Heart left ventricle (tissue), 16 donors: ENCODE measurements at regions of chr6 and their contacts with region 1.

Region 1: GRCh38 chr6:137933696-137934095 is 66.6 kb downstream of the TNFAIP3 start:
- DNase-seq: peak in 4 of 5 donors; percentile 13 to 48 (median 30)
- ATAC-seq: peak; percentile 47 to 91 (median 87)
- H3K4me3 ChIP-seq: no peak overlapping the region
- H3K27ac ChIP-seq: no peak overlapping the region
- H3K4me1 ChIP-seq: peaks cover 0 to 9% (median 0%) of the 10 kb centered on the region in 12 donors
- H3K27me3 ChIP-seq: no peaks in the 10 kb centered on the region
- CTCF ChIP-seq: no peak
- POLR2A ChIP-seq: no peak

Region 2: DNA sequence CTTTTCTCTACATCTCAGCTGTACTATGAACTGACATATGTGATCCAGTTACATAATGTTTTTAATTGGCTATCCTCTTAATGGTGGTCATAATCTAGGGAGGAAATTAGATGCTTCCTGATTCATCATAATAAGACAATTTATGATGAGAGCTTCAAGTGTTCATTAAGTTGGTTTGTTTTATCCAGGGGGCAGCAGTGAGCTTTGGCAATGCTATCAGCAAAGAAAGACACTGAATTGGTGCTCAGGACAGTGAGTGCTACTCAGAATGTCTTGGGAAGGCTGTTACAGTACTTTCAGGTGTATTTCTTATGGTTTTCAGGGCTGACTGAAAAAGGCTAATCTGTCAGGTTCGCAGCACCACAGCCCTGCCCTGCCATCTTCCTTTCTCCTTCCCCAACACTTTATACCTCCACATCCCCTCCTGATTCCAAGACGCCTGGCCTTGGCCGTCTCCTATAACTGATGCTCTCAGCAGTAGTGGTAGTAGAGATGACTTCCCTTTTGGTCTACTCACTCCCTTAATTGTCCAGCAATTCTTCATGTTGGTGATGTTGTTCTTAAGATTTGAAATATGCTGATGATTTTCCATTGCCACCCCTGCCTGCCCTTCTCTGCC is 133.6 kb before region 1 on chr6:
- intact Hi-C with region 1: loop called in 1 of 10 experiments (anchors 10 kb)
- DNase-seq: peak in 3 of 5 donors; percentile 29 to 48 (median 48)
- ATAC-seq: peak in 3 of 4 donors; percentile 42 to 54 (median 46)
- H3K4me3 ChIP-seq: no peak overlapping the region
- H3K27ac ChIP-seq: no peak overlapping the region
- H3K4me1 ChIP-seq: peaks cover 0 to 24% (median under 1%) of the 10 kb centered on the region in 12 donors
- H3K27me3 ChIP-seq: no peaks in the 10 kb centered on the region
- CTCF ChIP-seq: peak; percentile 19 to 66 (median 54)
- POLR2A ChIP-seq: no peak

Region 3: GRCh38 chr6:137873273-137873762 is 60.4 kb before region 1 on chr6:
- intact Hi-C with region 1: loop called in 2 of 10 experiments (anchors 2 to 10 kb)
- DNase-seq: peak in 4 of 5 donors; percentile 49 to 80 (median 66)
- ATAC-seq: peak; percentile 88 to 96 (median 92)
- H3K4me3 ChIP-seq: peak overlapping the region in 9 of 12 donors; percentile 2 to 98 (median 16)
- H3K27ac ChIP-seq: peak overlapping the region in 8 of 12 donors; percentile 3 to 82 (median 46)
- H3K4me1 ChIP-seq: peaks cover 0 to 86% (median 28%) of the 10 kb centered on the region in 12 donors
- H3K27me3 ChIP-seq: no peaks in the 10 kb centered on the region
- CTCF ChIP-seq: no peak
- POLR2A ChIP-seq: no peak

Region 4: GRCh38 chr6:137878486-137879285 is 55.0 kb before region 1 on chr6:
- intact Hi-C with region 1: loop called in 2 of 10 experiments (anchors 5 to 10 kb)
- DNase-seq: peak; percentile 52 to 81 (median 65)
- ATAC-seq: peak in 3 of 4 donors; percentile 60 to 69 (median 62)
- H3K4me3 ChIP-seq: no peak overlapping the region
- H3K27ac ChIP-seq: peak overlapping the region; percentile 4 to 63 (median 36)
- H3K4me1 ChIP-seq: peaks cover 0 to 82% (median 21%) of the 10 kb centered on the region in 12 donors
- H3K27me3 ChIP-seq: no peaks in the 10 kb centered on the region
- CTCF ChIP-seq: peak in 5 of 12 donors; percentile 7 to 49 (median 11)
- POLR2A ChIP-seq: no peak